ENCODE measurements at regions of chr1 and their contacts with region 1.

Region 1: GRCh38 chr1:182143154-182143657 is 81.7 kb upstream of the ZNF648 start:
- ATAC-seq: peak; percentile 10 to 83 (median 40)
- H3K4me3 ChIP-seq: no peak overlapping the region
- H3K27ac ChIP-seq: peak overlapping the region in 1 of 2 donors; percentile 92
- H3K4me1 ChIP-seq: peaks cover 24 to 26% of the 10 kb centered on the region in 2 donors

Region 2: DNA sequence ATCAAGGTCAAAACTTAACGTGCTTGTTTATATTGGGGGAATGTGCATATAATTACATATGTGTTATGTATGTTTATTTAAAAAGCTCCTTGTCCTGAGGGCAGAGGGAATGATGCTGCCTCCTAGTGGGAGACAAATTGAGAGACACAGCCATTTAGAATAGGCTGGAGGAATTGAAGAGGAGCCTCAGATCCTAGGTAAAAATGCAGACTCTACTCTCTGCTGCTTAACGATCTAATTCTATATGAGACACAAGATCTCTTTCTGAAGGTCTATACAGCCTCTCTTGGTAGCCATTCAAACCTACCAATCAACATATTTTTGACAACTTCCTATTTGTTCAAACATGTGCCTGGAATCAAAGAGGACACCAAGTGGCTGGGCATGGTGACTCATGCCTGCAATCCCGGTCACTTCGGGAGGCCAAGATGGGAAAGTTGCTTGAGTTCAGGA is 54.9 kb after region 1 on chr1:
- in situ Hi-C with region 1: loop called in 1 of 9 experiments (anchors 10 kb)
- ATAC-seq: peak in 3 of 8 experiments; percentile 73 to 84 (median 77)
- H3K4me3 ChIP-seq: no peak overlapping the region
- H3K27ac ChIP-seq: no peak overlapping the region
- H3K4me1 ChIP-seq: no peaks in the 10 kb centered on the region

Region 3: DNA sequence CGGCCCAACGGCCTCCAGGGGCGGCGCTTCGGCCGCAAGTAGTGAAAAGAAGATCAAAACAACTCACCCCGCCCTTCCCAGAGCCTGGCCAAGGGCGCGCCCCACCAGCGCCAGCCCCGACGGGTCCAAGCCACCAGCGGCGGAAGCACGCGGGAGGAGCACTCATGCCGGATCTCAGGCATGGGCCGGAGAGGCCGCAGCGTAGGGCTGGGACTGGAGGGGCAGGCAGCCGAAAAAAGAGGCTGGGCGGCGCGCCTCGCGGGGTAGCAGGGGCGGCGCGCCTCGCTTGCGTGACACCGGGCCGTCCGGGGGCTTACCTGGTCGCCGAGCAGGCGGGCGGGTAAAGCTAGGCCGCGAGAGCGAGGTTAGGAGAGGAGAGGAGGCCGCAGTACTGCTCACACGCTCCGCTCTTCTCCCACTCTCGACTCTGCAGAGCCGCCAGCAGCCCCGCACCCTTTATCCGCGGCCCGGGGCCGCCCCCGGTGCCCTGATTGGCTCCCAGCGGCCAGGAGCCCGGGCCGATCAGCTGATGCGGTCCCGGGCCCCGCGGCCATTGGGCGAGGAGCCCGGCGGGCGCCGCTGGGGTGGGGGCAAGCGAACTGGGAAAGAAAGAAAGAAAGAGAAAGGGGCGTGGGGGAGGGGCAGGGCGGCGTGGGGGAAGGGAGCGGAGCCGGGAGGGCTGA is 248.3 kb after region 1 on chr1 and contains the start of gene GLUL:
- in situ Hi-C with region 1: loop called in 6 of 9 experiments (anchors 10 kb)
- ATAC-seq: peak; percentile 84 to 94 (median 91)
- H3K4me3 ChIP-seq: peak within 1 kb of the TSS; percentile 84 to 98 (median 94)
- H3K27ac ChIP-seq: peak within 1 kb of the TSS; percentile 92
- H3K4me1 ChIP-seq: peaks cover 7 to 20% of the 10 kb centered on the region in 2 donors
- total RNA-seq, gene GLUL: 49.0 to 392 (median 167) TPM

Measured in motor neuron (in vitro differentiated cells).